SK-N-SH (cell line): ENCODE measurements at regions of chr9 and their contacts with region 1.

Region 1: GRCh38 chr9:136711751-136712689 is at the start of gene DIPK1B:
- DNase-seq: peak; percentile 100
- H3K4me3 ChIP-seq: peak within 1 kb of the TSS; percentile 61 to 69
- H3K27ac ChIP-seq: peak within 1 kb of the TSS in 1 of 2 experiments; percentile 71; a peak in 2 of 4 replicates
- H3K4me1 ChIP-seq: peaks cover 4 to 18% of the 10 kb centered on the region in 2 experiments; a peak in 1 of 4 replicates
- H3K27me3 ChIP-seq: no peaks in the 10 kb centered on the region
- CTCF ChIP-seq: no peak
- EP300 ChIP-seq: no peak
- RAD21 ChIP-seq: no peak
- polyA plus RNA-seq, gene DIPK1B: 24.5 and 27.1 TPM in 2 replicates

Region 2: GRCh38 chr9:136728080-136728547 is 16.1 kb after region 1 on chr9:
- CTCF ChIA-PET with region 1: interaction called, 99 read pairs
- POLR2A ChIA-PET with region 1: interaction called, 51 read pairs
- DNase-seq: peak; percentile 98
- H3K4me3 ChIP-seq: peak overlapping the region; percentile 83 to 85
- H3K27ac ChIP-seq: peak overlapping the region in 1 of 2 experiments; percentile 63; a peak in 2 of 4 replicates
- H3K4me1 ChIP-seq: peaks cover 12 to 25% of the 10 kb centered on the region in 2 experiments; a peak in 2 of 4 replicates
- H3K27me3 ChIP-seq: no peaks in the 10 kb centered on the region
- CTCF ChIP-seq: peak; percentile 75
- EP300 ChIP-seq: peak in 1 of 2 experiments; percentile 49; a peak in 1 of 4 replicates
- RAD21 ChIP-seq: no peak